ENCODE measurements at regions of chr15 and their contacts with region 1.

Region 1: DNA sequence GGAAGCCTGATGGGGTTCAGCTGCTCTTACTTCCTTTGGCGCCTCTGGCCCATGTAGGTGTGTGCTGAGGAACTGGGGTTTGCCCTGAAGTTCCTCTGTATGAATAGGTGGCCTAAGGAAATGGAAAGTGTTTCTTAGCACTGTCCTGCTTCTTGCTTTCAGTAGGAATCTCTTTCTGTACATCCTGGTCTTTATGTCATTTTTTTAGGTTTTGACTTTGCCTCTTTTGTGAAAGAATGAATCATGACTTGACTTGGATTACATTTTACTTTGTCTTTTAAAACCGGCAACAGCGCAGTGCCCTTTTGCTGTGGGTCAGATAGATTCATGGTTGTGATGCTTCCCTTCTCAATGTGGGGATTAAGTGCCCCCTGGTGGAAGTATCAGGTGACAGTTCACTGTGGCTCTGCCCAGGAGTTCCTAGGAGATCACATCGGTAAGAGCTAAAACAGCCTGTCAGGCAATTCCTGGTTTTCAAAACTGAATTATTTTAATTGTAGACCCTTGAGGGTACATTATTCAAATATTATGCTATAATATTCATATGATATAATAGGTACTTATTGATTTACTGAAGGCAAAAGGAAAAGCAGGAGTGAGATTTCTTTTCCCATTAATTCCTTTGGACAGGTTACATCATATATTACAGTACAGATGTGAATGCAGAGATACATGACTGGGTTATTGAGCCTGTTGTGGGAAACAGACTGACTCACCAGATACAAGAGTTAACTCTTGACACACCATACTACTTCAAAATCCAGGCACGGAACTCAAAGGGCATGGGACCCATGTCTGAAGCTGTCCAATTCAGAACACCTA is 95.4 kb downstream of the HCN4 start:
- DNase-seq: peak; percentile 56
- H3K4me3 ChIP-seq: no peak overlapping the region
- H3K27ac ChIP-seq: no peak overlapping the region
- H3K4me1 ChIP-seq: no peaks in the 10 kb centered on the region
- CTCF ChIP-seq: peak; percentile 89

Region 2: DNA sequence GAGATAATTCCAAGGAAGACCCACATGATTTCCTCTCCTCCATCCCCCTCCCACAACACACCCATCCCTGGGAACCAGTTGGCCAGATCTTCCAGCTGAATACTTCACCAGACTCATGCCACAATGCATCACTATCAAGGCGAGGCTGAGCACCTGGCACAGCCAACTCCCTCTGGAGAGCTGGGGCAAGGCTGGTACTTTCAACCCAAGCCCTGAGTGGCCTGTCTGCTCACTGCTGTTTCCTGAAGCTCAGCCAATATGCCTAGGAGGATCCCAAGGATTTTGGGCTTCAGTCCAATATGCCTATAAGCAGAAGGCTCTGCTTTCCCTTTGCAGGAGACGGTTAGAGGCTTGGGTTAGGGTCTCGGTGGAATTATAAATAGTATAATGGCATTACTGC is 312.0 kb before region 1 on chr15:
- CTCF ChIA-PET with region 1: no interaction called
- POLR2A ChIA-PET with region 1: no interaction called
- intact Hi-C with region 1: no loop called
- DNase-seq: no peak
- H3K4me3 ChIP-seq: no peak overlapping the region
- H3K27ac ChIP-seq: no peak overlapping the region
- H3K4me1 ChIP-seq: no peaks in the 10 kb centered on the region
- CTCF ChIP-seq: no peak

Region 3: GRCh38 chr15:73240866-73241499 is 32.4 kb before region 1 on chr15:
- CTCF ChIA-PET with region 1: no interaction called
- POLR2A ChIA-PET with region 1: interaction called, 4 read pairs
- intact Hi-C with region 1: loop called (anchors 2 kb)
- DNase-seq: peak; percentile 67
- H3K4me3 ChIP-seq: no peak overlapping the region
- H3K27ac ChIP-seq: no peak overlapping the region
- H3K4me1 ChIP-seq: no peaks in the 10 kb centered on the region
- CTCF ChIP-seq: peak; percentile 97

Region 4: GRCh38 chr15:73318463-73319351 is 45.3 kb after region 1 on chr15:
- CTCF ChIA-PET with region 1: no interaction called
- POLR2A ChIA-PET with region 1: no interaction called
- intact Hi-C with region 1: no loop called
- DNase-seq: peak; percentile 21
- H3K4me3 ChIP-seq: no peak overlapping the region
- H3K27ac ChIP-seq: no peak overlapping the region
- H3K4me1 ChIP-seq: no peaks in the 10 kb centered on the region
- CTCF ChIP-seq: no peak